ENCODE measurements at regions of chr12 and their contacts with region 1.

Region 1: GRCh38 chr12:49967042-49967776 is 5.5 kb downstream of the AQP5 start:
- DNase-seq: peak; percentile 87 to 98 (median 91)
- ATAC-seq: peak; percentile 88
- H3K4me3 ChIP-seq: peak overlapping the region; percentile 52 to 59
- H3K4me3 Mint-ChIP-seq: peak overlapping the region; percentile 74
- H3K27ac ChIP-seq: no peak overlapping the region
- H3K27ac Mint-ChIP-seq: no peak overlapping the region
- H3K4me1 ChIP-seq: peaks cover 9% of the 10 kb centered on the region
- H3K4me1 Mint-ChIP-seq: peaks cover 6% of the 10 kb centered on the region
- H3K27me3 ChIP-seq: peaks cover 4 to 14% of the 10 kb centered on the region in 2 experiments
- H3K27me3 Mint-ChIP-seq: peaks cover 41% of the 10 kb centered on the region
- CTCF ChIP-seq: peak; percentile 98

Region 2: DNA sequence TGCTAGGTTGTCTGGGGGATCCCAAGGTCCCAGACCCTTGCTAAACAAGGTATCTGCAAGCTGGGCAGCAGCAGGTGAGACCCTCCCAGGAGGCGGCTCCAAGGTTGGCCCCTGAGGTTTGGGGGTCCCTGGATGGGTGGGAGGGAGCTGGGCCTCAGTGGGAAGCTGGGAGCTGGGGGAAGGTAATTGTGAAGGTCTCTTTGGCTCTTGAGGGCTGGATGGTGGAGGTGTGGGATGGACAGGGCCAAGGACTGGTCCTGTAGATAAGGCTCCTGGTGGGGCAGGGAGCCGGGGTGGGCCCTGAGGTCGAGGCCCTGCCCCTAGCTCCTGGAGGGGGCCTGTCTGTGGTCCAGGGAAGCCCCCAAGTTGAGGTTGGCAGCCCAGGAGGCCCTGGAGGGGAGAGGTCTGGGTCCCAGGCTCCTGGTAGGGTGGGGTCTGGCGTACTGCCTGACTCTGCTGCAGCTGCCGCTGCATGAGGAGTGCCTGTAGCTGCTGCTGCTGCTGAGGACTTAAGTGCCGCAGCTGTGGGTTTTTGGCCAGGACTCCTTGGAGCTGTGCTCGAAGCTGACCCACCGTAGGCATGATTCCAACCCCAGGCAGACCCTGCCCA is 935.6 kb before region 1 on chr12:
- CTCF ChIA-PET with region 1: no interaction called
- POLR2A ChIA-PET with region 1: no interaction called
- intact Hi-C with region 1: no loop called
- DNase-seq: no peak
- ATAC-seq: no peak
- H3K4me3 ChIP-seq: no peak overlapping the region
- H3K4me3 Mint-ChIP-seq: no peak overlapping the region
- H3K27ac ChIP-seq: no peak overlapping the region
- H3K27ac Mint-ChIP-seq: no peak overlapping the region
- H3K4me1 ChIP-seq: no peaks in the 10 kb centered on the region
- H3K4me1 Mint-ChIP-seq: no peaks in the 10 kb centered on the region
- H3K27me3 ChIP-seq: no peaks in the 10 kb centered on the region
- H3K27me3 Mint-ChIP-seq: no peaks in the 10 kb centered on the region
- CTCF ChIP-seq: no peak

Region 3: GRCh38 chr12:49538510-49539403 is 428.5 kb before region 1 on chr12 and contains the start of gene KCNH3:
- CTCF ChIA-PET with region 1: no interaction called
- POLR2A ChIA-PET with region 1: no interaction called
- intact Hi-C with region 1: no loop called
- DNase-seq: peak; percentile 79 to 95 (median 91)
- ATAC-seq: peak; percentile 90
- H3K4me3 ChIP-seq: peak within 1 kb of the TSS; percentile 49 to 76
- H3K4me3 Mint-ChIP-seq: peak within 1 kb of the TSS; percentile 80
- H3K27ac ChIP-seq: no peak within 1 kb of the TSS
- H3K27ac Mint-ChIP-seq: no peak within 1 kb of the TSS
- H3K4me1 ChIP-seq: peaks cover 23% of the 10 kb centered on the region
- H3K4me1 Mint-ChIP-seq: peaks cover 33% of the 10 kb centered on the region
- H3K27me3 ChIP-seq: peaks cover 0 to 6% of the 10 kb centered on the region in 2 experiments
- H3K27me3 Mint-ChIP-seq: no peaks in the 10 kb centered on the region
- CTCF ChIP-seq: no peak
- total RNA-seq, gene KCNH3: 3.1 to 3.5 TPM

Region 4: GRCh38 chr12:49945394-49946080 is 21.7 kb before region 1 on chr12:
- CTCF ChIA-PET with region 1: interaction called, 41 read pairs
- POLR2A ChIA-PET with region 1: no interaction called
- intact Hi-C with region 1: no loop called
- DNase-seq: peak; percentile 59 to 86 (median 80)
- ATAC-seq: peak; percentile 97
- H3K4me3 ChIP-seq: peak overlapping the region in 1 of 2 experiments; percentile 34
- H3K4me3 Mint-ChIP-seq: peak overlapping the region; percentile 84
- H3K27ac ChIP-seq: no peak overlapping the region
- H3K27ac Mint-ChIP-seq: peak overlapping the region; percentile 78
- H3K4me1 ChIP-seq: no peaks in the 10 kb centered on the region
- H3K4me1 Mint-ChIP-seq: peaks cover 15% of the 10 kb centered on the region
- H3K27me3 ChIP-seq: no peaks in the 10 kb centered on the region
- H3K27me3 Mint-ChIP-seq: peaks cover 6% of the 10 kb centered on the region
- CTCF ChIP-seq: peak; percentile 82

Region 5: DNA sequence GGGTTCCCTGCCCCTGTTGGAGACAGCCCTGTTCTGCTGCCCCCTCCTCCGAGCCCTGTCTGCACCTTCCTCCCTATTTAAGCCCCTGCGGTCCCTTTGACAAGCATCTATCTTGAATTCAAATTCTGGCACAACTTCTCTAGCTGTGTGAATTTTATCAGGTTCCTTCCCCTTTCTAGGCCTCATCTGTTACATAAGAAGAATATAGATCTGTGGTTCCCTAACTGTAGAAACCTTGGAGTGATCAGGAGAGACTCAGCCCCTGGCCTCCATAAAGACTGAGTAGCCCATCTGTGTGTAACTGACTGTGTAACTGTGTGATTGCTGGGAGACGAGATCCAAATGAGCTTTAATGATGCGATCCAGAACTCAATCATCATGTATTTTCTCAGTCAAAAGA is 71.1 kb after region 1 on chr12:
- CTCF ChIA-PET with region 1: interaction called, 18 read pairs
- POLR2A ChIA-PET with region 1: no interaction called
- intact Hi-C with region 1: loop called in 1 of 2 experiments (anchors 1 kb)
- DNase-seq: no peak
- ATAC-seq: no peak
- H3K4me3 ChIP-seq: no peak overlapping the region
- H3K4me3 Mint-ChIP-seq: no peak overlapping the region
- H3K27ac ChIP-seq: no peak overlapping the region
- H3K27ac Mint-ChIP-seq: no peak overlapping the region
- H3K4me1 ChIP-seq: no peaks in the 10 kb centered on the region
- H3K4me1 Mint-ChIP-seq: no peaks in the 10 kb centered on the region
- H3K27me3 ChIP-seq: peaks cover 0 to 2% of the 10 kb centered on the region in 2 experiments
- H3K27me3 Mint-ChIP-seq: peaks cover 9% of the 10 kb centered on the region
- CTCF ChIP-seq: no peak

Region 6: GRCh38 chr12:50043854-50044253 is 76.6 kb after region 1 on chr12:
- CTCF ChIA-PET with region 1: interaction called, 18 read pairs
- POLR2A ChIA-PET with region 1: no interaction called
- intact Hi-C with region 1: loop called in 1 of 2 experiments (anchors 1 kb)
- DNase-seq: no peak
- ATAC-seq: no peak
- H3K4me3 ChIP-seq: no peak overlapping the region
- H3K4me3 Mint-ChIP-seq: no peak overlapping the region
- H3K27ac ChIP-seq: no peak overlapping the region
- H3K27ac Mint-ChIP-seq: no peak overlapping the region
- H3K4me1 ChIP-seq: no peaks in the 10 kb centered on the region
- H3K4me1 Mint-ChIP-seq: no peaks in the 10 kb centered on the region
- H3K27me3 ChIP-seq: peaks cover 0 to under 1% of the 10 kb centered on the region in 2 experiments
- H3K27me3 Mint-ChIP-seq: peaks cover 14% of the 10 kb centered on the region
- CTCF ChIP-seq: no peak

Measured in CD8-positive, alpha-beta T cell (primary cell).